Activated T-helper 2 cell treated with anti-CD3 and anti-CD28 coated beads, Interferon-gamma antibody, Interleukin-2, Interleukin-4, amounts not matched to agents 10 μg/mL and 5 μg/mL and 100 μg/mL, durations not matched to agents 14 hours and 24 hours and 36 hours (primary cell): ENCODE measurements at regions of chr15 and their contacts with region 1.

Region 1: GRCh38 chr15:48358229-48358641 is 27.0 kb downstream of the DUT start:
- DNase-seq: no peak
- H3K4me3 Mint-ChIP-seq: no peak overlapping the region
- H3K27ac Mint-ChIP-seq: no peak overlapping the region
- H3K4me1 Mint-ChIP-seq: peaks cover 6% of the 10 kb centered on the region
- H3K27me3 Mint-ChIP-seq: peaks cover 4% of the 10 kb centered on the region

Region 2: GRCh38 chr15:47586653-47587224 is 771.5 kb before region 1 on chr15:
- intact Hi-C with region 1: no loop called
- DNase-seq: no peak
- H3K4me3 Mint-ChIP-seq: no peak overlapping the region
- H3K27ac Mint-ChIP-seq: no peak overlapping the region
- H3K4me1 Mint-ChIP-seq: no peaks in the 10 kb centered on the region
- H3K27me3 Mint-ChIP-seq: no peaks in the 10 kb centered on the region

Region 3: GRCh38 chr15:48631176-48631770 is 273.0 kb after region 1 on chr15:
- intact Hi-C with region 1: loop called (anchors 5 kb)
- DNase-seq: no peak
- H3K4me3 Mint-ChIP-seq: no peak overlapping the region
- H3K27ac Mint-ChIP-seq: no peak overlapping the region
- H3K4me1 Mint-ChIP-seq: peaks cover 3% of the 10 kb centered on the region
- H3K27me3 Mint-ChIP-seq: no peaks in the 10 kb centered on the region